Activated CD4-positive, alpha-beta memory T cell treated with anti-CD3 and anti-CD28 coated beads, Interleukin-2, amount 10 ng/mL, durations not matched to agents 7 days and 5 days (primary cell): ENCODE measurements at regions of chr4 and their contacts with region 1.

Region 1: GRCh38 chr4:139295206-139295941 is 5.9 kb upstream of the NAA15 start:
- DNase-seq: peak; percentile 96
- H3K4me3 Mint-ChIP-seq: peak overlapping the region; percentile 92
- H3K27ac Mint-ChIP-seq: peak overlapping the region; percentile 78
- H3K4me1 Mint-ChIP-seq: peaks cover 33% of the 10 kb centered on the region
- H3K27me3 Mint-ChIP-seq: no peaks in the 10 kb centered on the region

Region 2: DNA sequence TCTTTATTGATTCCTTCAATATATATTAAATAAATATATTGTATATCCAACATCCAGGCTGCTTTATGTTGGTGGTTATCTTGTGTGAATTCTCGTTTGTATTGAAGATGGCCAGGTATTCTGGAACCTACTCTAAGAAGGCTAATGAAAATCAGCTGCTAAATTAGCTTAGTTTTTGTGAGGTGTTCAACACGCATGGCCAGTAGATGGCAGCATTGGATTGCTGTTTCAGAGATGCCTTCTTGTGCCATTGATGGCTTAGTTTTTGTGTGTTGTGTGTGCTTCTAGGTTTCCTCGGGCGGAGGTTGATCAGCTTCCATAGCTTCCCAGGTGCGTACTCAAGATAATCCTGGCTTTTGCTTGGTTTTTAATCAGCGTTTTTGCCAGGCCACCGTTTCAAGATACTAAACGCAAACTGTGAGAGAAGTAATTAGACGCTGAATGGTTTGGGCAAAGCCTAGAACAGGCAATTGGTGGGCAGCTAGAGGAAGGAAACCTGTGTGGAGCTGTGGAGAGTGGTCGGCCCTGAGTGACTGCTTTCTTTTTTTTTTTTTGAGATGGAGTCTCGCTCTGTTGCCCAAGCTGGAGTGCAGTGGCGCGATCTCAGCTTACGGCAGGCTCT is 264.6 kb before region 1 on chr4:
- CTCF ChIA-PET with region 1: interaction called, 48 read pairs
- POLR2A ChIA-PET with region 1: interaction called, 4 read pairs
- DNase-seq: peak; percentile 80
- H3K4me3 Mint-ChIP-seq: no peak overlapping the region
- H3K27ac Mint-ChIP-seq: no peak overlapping the region
- H3K4me1 Mint-ChIP-seq: peaks cover 5% of the 10 kb centered on the region
- H3K27me3 Mint-ChIP-seq: no peaks in the 10 kb centered on the region

Region 3: GRCh38 chr4:139092271-139092670 is 203.1 kb before region 1 on chr4:
- CTCF ChIA-PET with region 1: interaction called, 61 read pairs
- POLR2A ChIA-PET with region 1: no interaction called
- DNase-seq: no peak
- H3K4me3 Mint-ChIP-seq: no peak overlapping the region
- H3K27ac Mint-ChIP-seq: no peak overlapping the region
- H3K4me1 Mint-ChIP-seq: peaks cover 4% of the 10 kb centered on the region
- H3K27me3 Mint-ChIP-seq: no peaks in the 10 kb centered on the region

Region 4: DNA sequence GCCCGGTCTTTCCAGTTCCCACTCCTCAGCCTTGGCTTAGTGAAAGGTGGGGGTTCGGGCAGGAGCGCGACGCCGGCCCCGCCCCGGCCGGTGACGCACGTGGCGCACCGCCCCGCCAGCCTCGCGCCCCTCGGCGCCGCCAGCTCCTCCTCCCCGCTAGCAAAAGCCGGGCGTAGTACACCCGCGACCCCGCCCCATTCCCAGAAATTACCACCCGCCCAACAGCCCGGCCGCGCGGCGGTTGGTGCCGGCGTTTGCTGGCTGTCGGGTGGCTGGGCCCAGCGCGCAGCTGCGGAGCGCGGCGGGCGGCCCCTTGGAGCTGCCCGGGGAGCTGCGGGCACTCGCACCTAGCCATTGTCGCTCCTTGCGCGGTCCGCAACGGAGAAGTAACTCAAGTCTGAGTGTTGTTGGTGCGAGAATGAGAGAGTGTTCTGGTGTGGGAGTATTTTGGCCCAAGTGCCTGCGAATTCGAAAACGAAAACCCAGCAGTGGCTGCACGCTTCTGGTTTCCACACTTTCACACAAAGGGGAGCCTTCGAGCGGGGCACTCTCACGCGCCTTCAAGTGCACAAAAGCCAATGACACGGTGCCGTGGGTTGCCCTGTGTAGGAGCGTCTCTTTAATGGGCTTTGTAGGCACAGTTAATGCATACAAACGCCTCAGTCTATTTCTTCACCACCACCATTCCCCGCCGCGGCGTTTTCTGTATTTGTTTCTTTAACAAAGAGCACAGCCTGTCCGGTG is 117.3 kb before region 1 on chr4:
- CTCF ChIA-PET with region 1: interaction called, 14 read pairs
- POLR2A ChIA-PET with region 1: interaction called, 65 read pairs
- DNase-seq: peak; percentile 95
- H3K4me3 Mint-ChIP-seq: peak overlapping the region; percentile 78
- H3K27ac Mint-ChIP-seq: peak overlapping the region; percentile 85
- H3K4me1 Mint-ChIP-seq: peaks cover 21% of the 10 kb centered on the region
- H3K27me3 Mint-ChIP-seq: peaks cover 26% of the 10 kb centered on the region

Region 5: GRCh38 chr4:139229534-139230039 is 65.8 kb before region 1 on chr4:
- CTCF ChIA-PET with region 1: interaction called, 11 read pairs
- POLR2A ChIA-PET with region 1: interaction called, 5 read pairs
- DNase-seq: no peak
- H3K4me3 Mint-ChIP-seq: no peak overlapping the region
- H3K27ac Mint-ChIP-seq: no peak overlapping the region
- H3K4me1 Mint-ChIP-seq: no peaks in the 10 kb centered on the region
- H3K27me3 Mint-ChIP-seq: no peaks in the 10 kb centered on the region

Region 6: GRCh38 chr4:139279760-139280620 is 15.4 kb before region 1 on chr4 and contains the start of gene MGARP:
- CTCF ChIA-PET with region 1: interaction called, 20 read pairs
- POLR2A ChIA-PET with region 1: interaction called, 5 read pairs
- DNase-seq: no peak
- H3K4me3 Mint-ChIP-seq: peak within 1 kb of the TSS; percentile 59
- H3K27ac Mint-ChIP-seq: no peak within 1 kb of the TSS
- H3K4me1 Mint-ChIP-seq: peaks cover 17% of the 10 kb centered on the region
- H3K27me3 Mint-ChIP-seq: peaks cover 47% of the 10 kb centered on the region
- total RNA-seq, gene MGARP: not detected

Region 7: GRCh38 chr4:139410312-139410711 is 114.9 kb after region 1 on chr4:
- CTCF ChIA-PET with region 1: no interaction called
- POLR2A ChIA-PET with region 1: no interaction called
- DNase-seq: no peak
- H3K4me3 Mint-ChIP-seq: no peak overlapping the region
- H3K27ac Mint-ChIP-seq: no peak overlapping the region
- H3K4me1 Mint-ChIP-seq: peaks cover 2% of the 10 kb centered on the region
- H3K27me3 Mint-ChIP-seq: no peaks in the 10 kb centered on the region

Region 8: GRCh38 chr4:139470997-139471665 is 175.8 kb after region 1 on chr4:
- CTCF ChIA-PET with region 1: no interaction called
- POLR2A ChIA-PET with region 1: no interaction called
- DNase-seq: no peak
- H3K4me3 Mint-ChIP-seq: no peak overlapping the region
- H3K27ac Mint-ChIP-seq: no peak overlapping the region
- H3K4me1 Mint-ChIP-seq: no peaks in the 10 kb centered on the region
- H3K27me3 Mint-ChIP-seq: no peaks in the 10 kb centered on the region